Activated naive CD4-positive, alpha-beta T cell treated with anti-CD3 and anti-CD28 coated beads for 36 hours (primary cell): ENCODE measurements at regions of chr15 and their contacts with region 1.

Region 1: DNA sequence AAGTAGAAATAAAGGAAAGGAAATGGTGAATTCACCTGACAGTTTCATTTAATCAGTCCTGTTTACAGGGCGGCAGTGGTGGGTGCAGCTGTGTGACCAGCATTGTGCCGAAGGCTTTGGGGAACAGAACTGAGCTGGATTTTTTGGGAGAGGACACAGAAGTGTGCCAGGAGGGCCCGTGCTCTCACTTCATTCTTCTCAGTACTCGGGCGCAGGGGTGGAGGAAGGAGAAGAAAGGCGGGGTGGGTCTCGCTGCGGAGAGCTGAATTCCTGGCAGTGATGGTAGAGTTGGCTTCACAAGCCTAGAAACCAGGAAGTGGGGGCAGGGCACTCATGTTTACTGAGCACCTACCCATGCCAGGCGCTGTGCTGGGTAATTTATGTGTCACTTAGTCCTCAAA is 64.6 kb downstream of the CRTC3 start:
- DNase-seq: peak; percentile 97
- H3K4me3 Mint-ChIP-seq: peak overlapping the region; percentile 77
- H3K27ac Mint-ChIP-seq: peak overlapping the region; percentile 99
- H3K4me1 Mint-ChIP-seq: peaks cover 77% of the 10 kb centered on the region
- H3K27me3 Mint-ChIP-seq: no peaks in the 10 kb centered on the region

Region 2: DNA sequence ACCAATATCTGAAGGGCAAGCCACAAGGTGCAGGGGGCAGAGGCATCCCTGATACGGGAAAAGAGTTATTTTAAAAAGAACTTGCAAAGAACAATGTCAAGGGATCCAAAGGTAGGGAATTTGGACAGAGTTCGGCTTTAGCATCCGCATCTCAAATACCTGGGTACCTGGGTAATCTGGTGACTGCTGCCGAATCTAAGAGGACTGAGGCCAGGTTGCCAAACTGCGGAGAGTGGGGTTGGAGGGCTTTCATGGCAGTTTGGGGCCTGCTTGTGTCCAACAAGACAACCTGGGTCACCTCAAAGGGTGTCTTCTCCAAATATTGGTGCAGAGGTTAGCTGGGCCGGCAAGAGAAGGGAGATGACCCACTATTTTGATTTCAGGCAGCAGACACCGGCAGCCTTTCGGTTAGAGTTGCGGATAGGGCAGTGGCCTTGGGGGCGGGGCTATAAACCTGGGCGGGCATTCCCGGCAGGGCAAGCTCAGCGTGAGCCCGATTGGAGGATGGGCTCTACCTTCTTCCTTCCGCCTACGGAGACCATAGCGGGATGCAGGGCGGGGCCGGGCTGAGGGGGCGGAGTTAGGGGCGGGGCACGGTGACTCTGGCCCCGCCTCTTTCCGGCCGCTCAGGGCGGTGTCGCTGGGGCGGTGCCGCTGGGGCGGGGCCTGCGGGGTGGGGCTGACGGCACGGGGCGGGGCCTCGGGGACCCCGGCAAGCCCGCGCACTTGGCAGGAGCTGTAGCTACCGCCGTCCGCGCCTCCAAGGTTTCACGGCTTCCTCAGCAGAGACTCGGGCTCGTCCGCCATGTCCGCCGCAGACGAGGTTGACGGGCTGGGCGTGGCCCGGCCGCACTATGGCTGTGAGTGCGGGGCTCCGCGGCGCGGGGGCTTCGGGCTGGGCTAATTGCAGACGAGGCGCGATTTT is 206.5 kb before region 1 on chr15 and contains the start of gene IQGAP1:
- CTCF ChIA-PET with region 1: interaction called, 3 read pairs
- intact Hi-C with region 1: loop called (anchors 1 kb)
- DNase-seq: peak; percentile 99
- H3K4me3 Mint-ChIP-seq: peak within 1 kb of the TSS; percentile 89
- H3K27ac Mint-ChIP-seq: peak within 1 kb of the TSS; percentile 90
- H3K4me1 Mint-ChIP-seq: peaks cover 39% of the 10 kb centered on the region
- H3K27me3 Mint-ChIP-seq: no peaks in the 10 kb centered on the region
- total RNA-seq, gene IQGAP1: 136 to 143 TPM

Region 3: DNA sequence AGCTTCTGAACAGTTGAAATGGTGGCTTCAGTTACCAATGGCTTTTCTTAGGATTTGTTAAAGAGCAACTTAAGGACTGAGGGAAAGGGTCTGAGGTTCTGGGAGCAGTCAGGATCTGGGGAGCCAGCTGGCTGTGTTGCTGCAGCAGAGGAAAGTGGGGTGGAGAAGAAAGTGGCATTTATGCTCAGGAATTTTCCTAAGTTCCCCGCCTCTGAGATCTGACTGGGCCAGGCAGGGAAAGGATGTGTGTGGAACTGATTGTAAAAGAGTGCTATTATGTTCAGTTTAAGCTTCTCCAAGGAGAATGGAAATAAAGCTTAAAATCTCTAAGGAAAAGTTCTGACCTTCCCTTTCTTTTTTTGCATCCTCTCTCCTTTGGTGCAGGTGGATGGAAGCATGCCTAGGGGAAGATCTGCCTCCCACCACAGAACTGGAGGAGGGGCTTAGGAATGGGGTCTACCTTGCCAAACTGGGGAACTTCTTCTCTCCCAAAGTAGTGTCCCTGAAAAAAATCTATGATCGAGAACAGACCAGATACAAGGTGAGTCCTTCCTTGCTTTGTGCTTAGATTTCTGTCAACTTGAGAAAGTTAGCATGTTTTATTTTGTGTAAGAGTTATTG is 168.5 kb before region 1 on chr15:
- CTCF ChIA-PET with region 1: no interaction called
- intact Hi-C with region 1: no loop called
- DNase-seq: no peak
- H3K4me3 Mint-ChIP-seq: no peak overlapping the region
- H3K27ac Mint-ChIP-seq: no peak overlapping the region
- H3K4me1 Mint-ChIP-seq: peaks cover 37% of the 10 kb centered on the region
- H3K27me3 Mint-ChIP-seq: no peaks in the 10 kb centered on the region

Region 4: DNA sequence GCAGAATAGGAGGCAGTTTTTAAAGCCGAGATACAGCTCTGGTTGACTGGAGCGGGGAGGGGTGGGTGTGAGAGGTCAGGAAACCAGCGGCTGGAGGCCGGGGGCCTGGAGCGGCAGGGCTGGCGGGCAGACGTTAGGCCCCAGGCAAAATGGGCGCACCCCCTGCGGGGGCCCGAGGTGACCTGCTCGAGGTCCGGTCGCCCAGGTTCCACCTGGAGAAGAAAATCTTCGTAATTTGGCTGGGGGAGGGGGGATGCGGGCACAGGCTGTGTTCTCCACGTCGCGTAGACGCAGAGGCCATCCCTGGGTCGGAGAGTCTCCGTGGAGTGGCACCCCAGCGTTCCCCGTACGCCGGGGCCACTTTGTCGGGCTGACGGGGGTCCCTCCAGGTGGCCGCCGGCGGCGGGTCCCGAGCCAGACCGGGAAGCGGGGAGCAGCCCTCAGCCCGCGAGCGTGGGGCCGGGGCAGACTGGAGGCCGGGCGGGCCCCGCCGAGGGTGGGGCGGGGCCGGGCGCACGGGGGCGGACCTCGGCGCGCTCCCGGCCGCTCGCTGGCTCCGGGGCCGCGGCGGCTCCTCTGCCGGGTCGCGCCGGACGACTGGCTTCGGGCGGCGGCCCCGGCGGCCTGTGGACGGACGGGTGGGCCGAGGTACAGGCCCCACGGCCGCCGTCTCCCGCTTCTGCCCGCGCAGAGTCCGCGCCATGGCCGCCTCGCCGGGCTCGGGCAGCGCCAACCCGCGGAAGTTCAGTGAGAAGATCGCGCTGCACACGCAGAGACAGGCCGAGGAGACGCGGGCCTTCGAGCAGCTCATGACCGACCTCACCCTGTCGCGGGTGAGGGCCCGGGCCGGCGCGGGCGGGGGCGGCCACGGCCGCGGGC is 64.7 kb before region 1 on chr15 and contains the start of gene CRTC3:
- CTCF ChIA-PET with region 1: interaction called, 4 read pairs
- intact Hi-C with region 1: loop called (anchors 2 kb)
- DNase-seq: peak; percentile 63
- H3K4me3 Mint-ChIP-seq: peak within 1 kb of the TSS; percentile 92
- H3K27ac Mint-ChIP-seq: peak within 1 kb of the TSS; percentile 89
- H3K4me1 Mint-ChIP-seq: peaks cover 42% of the 10 kb centered on the region
- H3K27me3 Mint-ChIP-seq: no peaks in the 10 kb centered on the region
- total RNA-seq, gene CRTC3: 40.6 to 42.7 TPM

Region 5: DNA sequence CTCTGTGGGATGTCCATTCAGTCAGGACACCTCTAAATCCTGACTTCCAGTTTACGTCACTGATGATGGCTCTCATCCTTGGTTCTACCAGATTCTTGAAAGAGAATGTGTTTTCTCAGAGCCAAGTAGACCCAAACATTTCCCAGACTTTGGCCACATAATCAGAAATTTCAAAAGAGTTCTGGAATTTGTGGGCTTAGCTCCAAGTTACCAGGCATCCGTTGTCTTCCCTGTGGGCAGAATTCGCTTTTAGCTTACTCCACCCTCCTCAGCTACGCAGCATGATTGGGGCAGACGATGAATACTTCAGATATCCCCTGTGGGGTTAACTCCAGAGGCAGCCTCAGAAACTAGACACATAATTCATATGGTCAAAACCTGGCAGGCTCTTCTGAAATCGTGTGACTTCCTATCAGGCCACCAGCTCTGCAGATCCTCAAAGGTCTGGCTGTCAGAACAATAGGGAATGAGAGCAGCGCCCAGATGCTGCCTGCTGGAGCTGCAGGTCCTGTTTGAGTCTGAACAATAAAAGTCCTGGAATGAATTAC is 34.0 kb before region 1 on chr15:
- CTCF ChIA-PET with region 1: interaction called, 7 read pairs
- intact Hi-C with region 1: loop called (anchors 1 kb)
- DNase-seq: no peak
- H3K4me3 Mint-ChIP-seq: no peak overlapping the region
- H3K27ac Mint-ChIP-seq: no peak overlapping the region
- H3K4me1 Mint-ChIP-seq: peaks cover 84% of the 10 kb centered on the region
- H3K27me3 Mint-ChIP-seq: no peaks in the 10 kb centered on the region

Region 6: DNA sequence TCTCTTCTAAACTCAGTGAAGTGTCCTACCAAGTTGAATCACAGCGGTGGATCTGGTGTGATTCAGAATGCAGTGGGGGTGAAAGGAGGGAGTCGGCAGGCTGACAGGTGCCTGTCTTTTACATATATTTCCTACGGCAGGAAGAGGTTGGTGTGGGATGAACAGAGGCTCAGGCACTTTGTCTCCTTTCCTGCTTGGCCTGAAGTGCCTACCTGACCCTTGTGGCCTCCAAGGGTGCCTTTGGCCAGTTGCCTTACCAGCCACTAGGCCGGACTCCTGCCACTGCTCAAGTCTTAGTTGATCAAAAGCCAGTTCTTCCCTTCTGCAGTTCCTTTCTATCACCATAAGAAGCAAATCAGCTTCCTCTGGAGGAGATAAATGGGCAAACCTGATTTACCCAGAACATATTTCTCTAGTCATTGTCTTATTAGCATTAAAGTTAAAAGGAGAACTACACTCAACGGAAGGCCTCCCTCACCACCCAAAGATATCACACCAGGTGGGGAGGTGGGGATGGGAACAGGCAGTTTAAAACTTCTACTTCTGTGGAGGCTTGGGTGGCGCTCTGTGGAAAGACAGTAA is 12.4 kb before region 1 on chr15:
- CTCF ChIA-PET with region 1: interaction called, 6 read pairs
- intact Hi-C with region 1: loop called (anchors 1 kb)
- DNase-seq: peak; percentile 77
- H3K4me3 Mint-ChIP-seq: peak overlapping the region; percentile 20
- H3K27ac Mint-ChIP-seq: peak overlapping the region; percentile 76
- H3K4me1 Mint-ChIP-seq: peaks cover 66% of the 10 kb centered on the region
- H3K27me3 Mint-ChIP-seq: no peaks in the 10 kb centered on the region